ENCODE measurements at regions of chr14 and their contacts with region 1.

Region 1: GRCh38 chr14:50342221-50343078 is 30.3 kb downstream of the DMAC2L start:
- DNase-seq: peak; percentile 71
- ATAC-seq: peak; percentile 73
- H3K4me3 ChIP-seq: peak overlapping the region; percentile 6; the same call in 1 of the 2 replicates
- H3K27ac ChIP-seq: peak overlapping the region; percentile 85; the same call in 1 of the 2 replicates
- H3K4me1 ChIP-seq: peaks cover 19% of the 10 kb centered on the region
- H3K27me3 ChIP-seq: no peaks in the 10 kb centered on the region
- CTCF ChIP-seq: peak; percentile 52
- POLR2A ChIP-seq: no peak
- RAD21 ChIP-seq: peak; percentile 58

Region 2: GRCh38 chr14:49892636-49893308 is 449.7 kb before region 1 on chr14 and contains the start of gene ARF6:
- CTCF ChIA-PET with region 1: no interaction called
- POLR2A ChIA-PET with region 1: no interaction called
- dilution Hi-C with region 1: no loop called
- in situ Hi-C with region 1: no loop called
- intact Hi-C with region 1: no loop called
- DNase-seq: peak; percentile 96
- ATAC-seq: peak; percentile 97
- H3K4me3 ChIP-seq: peak within 1 kb of the TSS; percentile 84
- H3K27ac ChIP-seq: peak within 1 kb of the TSS; percentile 98
- H3K4me1 ChIP-seq: peaks cover 2% of the 10 kb centered on the region; the same call in 1 of the 2 replicates
- H3K27me3 ChIP-seq: no peaks in the 10 kb centered on the region
- CTCF ChIP-seq: peak; percentile 26; the same call in 1 of the 2 replicates
- POLR2A ChIP-seq: peak; percentile 92
- RAD21 ChIP-seq: peak; percentile 27
- total RNA-seq, gene ARF6: 40.1 and 65.8 TPM in 2 replicates

Region 3: GRCh38 chr14:50225067-50225973 is 117.1 kb before region 1 on chr14:
- CTCF ChIA-PET with region 1: no interaction called
- POLR2A ChIA-PET with region 1: no interaction called
- dilution Hi-C with region 1: no loop called
- in situ Hi-C with region 1: no loop called
- intact Hi-C with region 1: no loop called
- DNase-seq: peak; percentile 87
- ATAC-seq: peak; percentile 88
- H3K4me3 ChIP-seq: no peak overlapping the region
- H3K27ac ChIP-seq: no peak overlapping the region
- H3K4me1 ChIP-seq: peaks cover 2% of the 10 kb centered on the region; the same call in 1 of the 2 replicates
- H3K27me3 ChIP-seq: no peaks in the 10 kb centered on the region
- CTCF ChIP-seq: no peak
- POLR2A ChIP-seq: no peak
- RAD21 ChIP-seq: no peak

Region 4: GRCh38 chr14:50396631-50397390 is 54.4 kb after region 1 on chr14 and contains the start of gene CDKL1:
- CTCF ChIA-PET with region 1: interaction called, 4 read pairs
- POLR2A ChIA-PET with region 1: no interaction called
- dilution Hi-C with region 1: no loop called
- in situ Hi-C with region 1: no loop called
- intact Hi-C with region 1: loop called (anchors 2 kb)
- DNase-seq: peak; percentile 70
- ATAC-seq: peak; percentile 84
- H3K4me3 ChIP-seq: peak within 1 kb of the TSS; percentile 61
- H3K27ac ChIP-seq: peak within 1 kb of the TSS; percentile 77
- H3K4me1 ChIP-seq: peaks cover 19% of the 10 kb centered on the region
- H3K27me3 ChIP-seq: no peaks in the 10 kb centered on the region
- CTCF ChIP-seq: no peak
- POLR2A ChIP-seq: no peak
- RAD21 ChIP-seq: no peak
- total RNA-seq, gene CDKL1: 3.8 and 7.2 TPM in 2 replicates